IMR-90 (cell line): ENCODE measurements at regions of chr4 and their contacts with region 1.

Region 1: GRCh38 chr4:40056716-40057585 is at the start of gene N4BP2:
- DNase-seq: peak; percentile 68
- ATAC-seq: peak; percentile 70
- H3K4me3 ChIP-seq: peak within 1 kb of the TSS; percentile 76
- H3K27ac ChIP-seq: peak within 1 kb of the TSS; percentile 93
- H3K4me1 ChIP-seq: no peaks in the 10 kb centered on the region
- H3K27me3 ChIP-seq: no peaks in the 10 kb centered on the region
- CTCF ChIP-seq: peak; percentile 91
- POLR2A ChIP-seq: peak; percentile 80
- RAD21 ChIP-seq: peak; percentile 72
- total RNA-seq, gene N4BP2: 2.2 and 4.2 TPM in 2 replicates

Region 2: DNA sequence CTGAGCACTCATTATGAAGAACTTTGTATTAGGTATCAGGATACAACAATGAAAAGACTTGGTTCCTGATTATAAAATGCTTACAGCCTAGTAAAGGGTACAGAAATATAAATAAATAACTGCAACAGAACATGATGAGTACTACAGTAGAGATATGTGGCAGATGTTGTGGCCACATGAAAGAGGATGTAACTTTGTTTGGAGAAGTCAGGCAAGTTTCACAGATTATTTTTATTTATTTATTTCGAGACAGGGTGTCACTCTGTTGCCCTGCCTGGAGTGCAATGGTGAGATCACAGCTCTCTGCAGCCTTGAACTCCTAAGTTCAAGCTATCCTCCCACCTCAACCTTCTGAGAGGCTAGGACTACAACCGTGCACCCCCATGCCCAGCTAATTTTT is 374.8 kb before region 1 on chr4:
- CTCF ChIA-PET with region 1: no interaction called
- POLR2A ChIA-PET with region 1: no interaction called
- dilution Hi-C with region 1: no loop called
- in situ Hi-C with region 1: no loop called
- intact Hi-C with region 1: no loop called
- DNase-seq: no peak
- ATAC-seq: no peak
- H3K4me3 ChIP-seq: no peak overlapping the region
- H3K27ac ChIP-seq: no peak overlapping the region
- H3K4me1 ChIP-seq: no peaks in the 10 kb centered on the region
- H3K27me3 ChIP-seq: no peaks in the 10 kb centered on the region
- CTCF ChIP-seq: no peak
- POLR2A ChIP-seq: no peak
- RAD21 ChIP-seq: no peak

Region 3: GRCh38 chr4:39977489-39978377 is 79.2 kb before region 1 on chr4 and contains the start of gene PDS5A:
- CTCF ChIA-PET with region 1: no interaction called
- POLR2A ChIA-PET with region 1: no interaction called
- dilution Hi-C with region 1: no loop called
- in situ Hi-C with region 1: no loop called
- intact Hi-C with region 1: loop called (anchors 5 kb)
- DNase-seq: peak; percentile 84
- ATAC-seq: peak; percentile 89
- H3K4me3 ChIP-seq: peak within 1 kb of the TSS; percentile 96
- H3K27ac ChIP-seq: peak within 1 kb of the TSS; percentile 91
- H3K4me1 ChIP-seq: peaks cover 2% of the 10 kb centered on the region
- H3K27me3 ChIP-seq: no peaks in the 10 kb centered on the region
- CTCF ChIP-seq: peak; percentile 99
- POLR2A ChIP-seq: peak; percentile 62
- RAD21 ChIP-seq: peak; percentile 71
- total RNA-seq, gene PDS5A: 33.5 and 53.0 TPM in 2 replicates

Region 4: GRCh38 chr4:40140196-40140595 is 83.2 kb after region 1 on chr4:
- CTCF ChIA-PET with region 1: no interaction called
- POLR2A ChIA-PET with region 1: no interaction called
- dilution Hi-C with region 1: no loop called
- in situ Hi-C with region 1: no loop called
- intact Hi-C with region 1: loop called (anchors 5 kb)
- DNase-seq: no peak
- ATAC-seq: no peak
- H3K4me3 ChIP-seq: no peak overlapping the region
- H3K27ac ChIP-seq: no peak overlapping the region
- H3K4me1 ChIP-seq: peaks cover 2% of the 10 kb centered on the region; the same call in 1 of the 2 replicates
- H3K27me3 ChIP-seq: no peaks in the 10 kb centered on the region
- CTCF ChIP-seq: no peak
- POLR2A ChIP-seq: no peak
- RAD21 ChIP-seq: no peak

Region 5: DNA sequence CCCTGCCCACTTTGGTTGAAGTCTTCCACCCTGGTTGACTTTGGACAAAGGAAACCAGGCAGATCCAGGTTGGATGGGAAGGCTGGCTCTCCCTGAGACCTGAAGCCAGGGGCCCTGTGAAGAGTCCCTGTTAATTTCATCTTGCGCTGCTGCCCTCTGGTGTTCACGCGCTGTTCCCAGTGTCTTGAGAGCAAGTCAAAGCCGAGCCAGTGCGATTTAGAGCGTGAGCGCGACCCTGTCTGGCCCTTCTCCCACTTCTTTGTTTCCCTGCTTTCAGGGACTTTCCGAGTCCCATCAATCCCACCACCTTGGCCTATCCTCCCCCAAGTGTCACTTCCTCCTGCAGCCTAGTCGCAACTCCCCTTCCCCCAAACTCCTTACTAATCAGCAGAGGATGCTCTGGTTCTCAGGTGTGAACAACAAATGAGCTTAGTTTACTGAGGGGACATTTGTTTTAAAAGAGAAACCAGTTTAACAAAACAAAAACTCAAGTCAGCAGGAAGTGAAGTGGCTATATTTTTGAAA is 252.4 kb after region 1 on chr4:
- CTCF ChIA-PET with region 1: interaction called, 3 read pairs
- POLR2A ChIA-PET with region 1: no interaction called
- dilution Hi-C with region 1: no loop called
- in situ Hi-C with region 1: loop called (anchors 25 kb)
- intact Hi-C with region 1: loop called (anchors 1 kb)
- DNase-seq: peak; percentile 77
- ATAC-seq: peak; percentile 99
- H3K4me3 ChIP-seq: no peak overlapping the region
- H3K27ac ChIP-seq: no peak overlapping the region
- H3K4me1 ChIP-seq: no peaks in the 10 kb centered on the region
- H3K27me3 ChIP-seq: peaks cover 10% of the 10 kb centered on the region
- CTCF ChIP-seq: peak; percentile 88
- POLR2A ChIP-seq: no peak
- RAD21 ChIP-seq: peak; percentile 83

Region 6: DNA sequence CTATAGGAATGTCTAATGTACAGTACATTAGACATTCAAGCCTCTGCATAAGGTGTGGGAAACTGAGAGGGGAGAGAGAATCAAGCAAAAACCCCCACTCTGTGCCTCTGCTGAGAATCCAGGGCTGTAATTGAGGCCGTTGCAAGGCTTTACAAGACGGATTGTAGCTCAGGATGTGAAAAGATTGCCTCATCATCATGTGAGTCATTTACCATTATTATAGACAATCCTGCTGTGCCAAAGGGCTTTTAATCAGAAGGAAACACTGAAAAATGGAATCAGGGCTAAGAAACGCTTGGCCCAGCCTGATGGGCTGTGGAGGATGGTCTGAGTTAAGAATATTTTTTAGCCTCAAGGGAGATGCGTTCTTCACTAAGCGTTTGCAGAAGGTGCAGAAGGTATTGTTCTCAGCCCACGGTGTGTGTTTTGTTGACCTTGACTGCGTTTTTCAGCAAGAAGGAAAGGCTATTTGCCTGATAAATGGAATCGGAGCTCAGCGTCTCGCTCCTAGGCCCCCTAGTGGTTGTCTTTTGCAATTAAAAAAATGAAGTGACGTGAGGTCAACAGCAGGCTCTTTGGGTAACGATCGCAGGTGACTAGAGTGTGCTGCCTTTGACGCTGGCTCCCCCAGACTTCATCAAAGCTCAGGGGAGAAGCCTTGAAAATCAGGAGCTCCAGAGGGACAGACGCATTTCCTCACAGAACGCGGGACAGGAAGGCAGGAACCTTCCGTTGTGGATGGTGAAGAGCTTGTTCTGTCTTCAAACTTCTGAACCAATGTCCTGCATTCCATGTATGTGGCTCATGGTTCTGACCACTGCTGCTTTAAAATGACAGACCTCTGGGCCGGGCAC is 260.1 kb after region 1 on chr4:
- CTCF ChIA-PET with region 1: interaction called, 11 read pairs
- POLR2A ChIA-PET with region 1: interaction called, 3 read pairs
- dilution Hi-C with region 1: no loop called
- in situ Hi-C with region 1: loop called (anchors 25 kb)
- intact Hi-C with region 1: no loop called
- DNase-seq: peak; percentile 91
- ATAC-seq: peak; percentile 67
- H3K4me3 ChIP-seq: peak overlapping the region; percentile 35
- H3K27ac ChIP-seq: peak overlapping the region; percentile 84
- H3K4me1 ChIP-seq: peaks cover 6% of the 10 kb centered on the region
- H3K27me3 ChIP-seq: no peaks in the 10 kb centered on the region
- CTCF ChIP-seq: peak; percentile 77
- POLR2A ChIP-seq: peak; percentile 75
- RAD21 ChIP-seq: peak; percentile 49

Region 7: GRCh38 chr4:40502934-40503333 is 446.0 kb after region 1 on chr4:
- CTCF ChIA-PET with region 1: no interaction called
- POLR2A ChIA-PET with region 1: no interaction called
- dilution Hi-C with region 1: no loop called
- in situ Hi-C with region 1: no loop called
- intact Hi-C with region 1: loop called (anchors 10 kb)
- DNase-seq: peak; percentile 9
- ATAC-seq: no peak
- H3K4me3 ChIP-seq: no peak overlapping the region
- H3K27ac ChIP-seq: no peak overlapping the region
- H3K4me1 ChIP-seq: peaks cover 4% of the 10 kb centered on the region; the same call in 1 of the 2 replicates
- H3K27me3 ChIP-seq: no peaks in the 10 kb centered on the region
- CTCF ChIP-seq: no peak
- POLR2A ChIP-seq: no peak
- RAD21 ChIP-seq: no peak

Region 8: DNA sequence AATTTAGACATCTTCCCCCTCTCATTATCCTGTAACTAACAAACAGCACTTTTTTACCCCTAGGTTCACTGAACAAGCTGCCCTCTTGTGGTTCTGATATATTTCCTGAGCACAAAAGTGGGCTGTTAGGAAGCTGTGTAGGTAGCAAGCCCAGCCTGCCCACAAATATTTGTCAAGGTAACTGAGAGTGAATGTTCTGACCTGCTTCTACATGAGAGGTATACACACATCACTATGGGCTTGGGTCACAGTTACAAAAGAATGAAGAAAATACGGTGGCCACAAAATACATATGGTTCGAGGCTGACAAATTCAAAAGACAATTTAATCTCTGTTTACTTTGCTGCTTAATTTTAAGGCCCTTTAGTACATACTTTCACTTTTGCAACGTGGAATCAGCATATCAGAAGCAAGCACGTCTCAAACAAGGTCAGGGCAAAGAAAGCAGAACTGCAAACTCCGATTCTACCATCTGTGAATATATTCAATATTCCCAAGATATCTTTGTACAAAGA is 494.1 kb after region 1 on chr4:
- CTCF ChIA-PET with region 1: no interaction called
- POLR2A ChIA-PET with region 1: no interaction called
- dilution Hi-C with region 1: no loop called
- in situ Hi-C with region 1: no loop called
- intact Hi-C with region 1: loop called (anchors 2 kb)
- DNase-seq: peak; percentile 52
- ATAC-seq: peak; percentile 68
- H3K4me3 ChIP-seq: peak overlapping the region; percentile 28
- H3K27ac ChIP-seq: no peak overlapping the region
- H3K4me1 ChIP-seq: 0 out of 2 replicates have a peak, but pooled peaks cover 5% of the 10 kb centered on the region
- H3K27me3 ChIP-seq: no peaks in the 10 kb centered on the region
- CTCF ChIP-seq: peak; percentile 36
- POLR2A ChIP-seq: no peak
- RAD21 ChIP-seq: no peak; the same call in 1 of the 2 replicates